Activated naive CD4-positive, alpha-beta T cell treated with anti-CD3 and anti-CD28 coated beads for 36 hours (primary cell): ENCODE measurements at regions of chr17 and their contacts with region 1.

Region 1: GRCh38 chr17:43940630-43941029 is 1.6 kb downstream of the PPY start:
- DNase-seq: peak; percentile 46
- H3K4me3 Mint-ChIP-seq: no peak overlapping the region
- H3K27ac Mint-ChIP-seq: no peak overlapping the region
- H3K4me1 Mint-ChIP-seq: peaks cover 20% of the 10 kb centered on the region
- H3K27me3 Mint-ChIP-seq: peaks cover 2% of the 10 kb centered on the region

Region 2: DNA sequence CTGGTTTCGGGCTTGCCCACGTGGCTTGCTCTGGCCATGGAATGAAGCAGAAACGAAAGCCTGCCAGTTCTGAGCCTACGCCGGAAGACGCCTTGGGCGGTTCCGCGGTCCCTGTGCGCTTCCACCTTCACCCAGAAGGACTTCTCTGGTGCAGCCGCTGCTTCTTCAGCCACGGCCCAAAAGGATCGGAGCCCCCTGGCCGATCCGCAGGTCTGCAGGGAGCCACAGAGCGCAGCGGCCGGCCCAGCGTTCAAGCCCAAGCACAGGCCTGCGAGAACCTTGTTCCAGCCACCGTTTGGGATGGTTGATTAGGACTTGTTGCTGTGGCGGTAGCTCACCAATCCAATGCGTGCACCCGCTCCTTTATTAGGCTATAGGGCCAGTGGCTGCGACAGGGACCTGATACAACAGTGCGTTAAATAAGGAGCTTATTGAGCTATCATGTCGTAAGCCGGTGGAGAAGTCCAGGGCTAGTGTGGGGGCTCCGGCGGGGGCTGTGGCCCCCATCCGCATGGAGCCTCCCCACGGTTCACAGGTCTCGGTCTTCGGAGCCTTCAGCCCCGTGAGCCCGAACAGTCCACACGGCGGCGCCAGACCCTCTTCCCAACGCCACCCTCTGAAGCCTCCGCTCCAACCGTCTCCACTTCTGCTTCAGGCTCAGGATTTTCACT is 23.1 kb before region 1 on chr17:
- CTCF ChIA-PET with region 1: interaction called, 6 read pairs
- intact Hi-C with region 1: loop called (anchors 1 kb)
- DNase-seq: peak; percentile 73
- H3K4me3 Mint-ChIP-seq: peak overlapping the region; percentile 65
- H3K27ac Mint-ChIP-seq: peak overlapping the region; percentile 9
- H3K4me1 Mint-ChIP-seq: peaks cover 13% of the 10 kb centered on the region
- H3K27me3 Mint-ChIP-seq: no peaks in the 10 kb centered on the region

Region 3: DNA sequence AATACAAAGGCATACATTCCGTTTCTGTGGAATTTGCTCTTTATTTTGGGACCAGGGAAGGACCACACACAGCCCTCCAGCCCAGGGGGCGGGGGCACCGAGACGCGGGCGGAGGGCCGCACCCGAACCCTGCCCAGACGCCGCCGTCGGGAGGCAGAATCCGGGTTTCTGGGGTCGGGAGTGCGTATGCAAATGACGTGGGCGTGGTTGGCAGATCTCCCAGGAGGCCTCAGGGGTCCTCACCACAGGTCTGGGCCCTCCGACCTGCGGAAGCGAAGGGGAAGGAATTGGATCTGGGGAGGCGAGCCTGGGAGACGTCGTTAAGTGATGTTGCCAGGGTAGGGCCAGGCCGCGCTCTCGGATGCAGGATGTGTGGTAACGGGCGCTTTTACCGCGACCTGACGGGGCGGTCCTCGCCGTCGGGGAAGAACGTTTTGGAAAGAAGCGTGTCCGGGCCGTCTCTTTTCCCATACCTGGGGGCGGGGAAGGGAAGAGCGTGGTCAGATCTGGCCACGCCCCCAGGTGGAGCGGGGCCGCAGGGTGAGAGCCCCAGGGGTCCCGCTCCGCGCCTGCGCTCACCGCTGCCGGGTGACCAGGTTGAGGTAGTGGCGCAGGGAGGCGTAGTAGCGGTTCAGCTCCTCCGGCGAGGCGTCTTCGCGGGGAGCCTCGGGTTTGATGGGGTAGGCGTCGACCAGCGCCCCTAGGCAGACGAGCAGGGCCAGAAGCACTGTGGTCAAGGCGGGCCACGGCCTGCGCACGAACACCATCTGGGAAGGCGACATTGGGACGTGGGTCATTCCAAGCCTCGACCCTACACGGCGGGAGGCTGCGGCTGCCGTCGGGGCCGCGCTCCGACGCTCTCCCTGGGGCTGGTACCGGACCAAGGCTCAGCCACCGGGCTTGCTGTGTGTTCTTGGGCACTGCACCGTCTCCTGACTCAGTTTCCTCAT is 12.4 kb after region 1 on chr17:
- CTCF ChIA-PET with region 1: interaction called, 10 read pairs
- intact Hi-C with region 1: no loop called
- DNase-seq: peak; percentile 21
- H3K4me3 Mint-ChIP-seq: no peak overlapping the region
- H3K27ac Mint-ChIP-seq: no peak overlapping the region
- H3K4me1 Mint-ChIP-seq: peaks cover 2% of the 10 kb centered on the region
- H3K27me3 Mint-ChIP-seq: peaks cover 35% of the 10 kb centered on the region

Region 4: GRCh38 chr17:43994272-43995149 is 53.9 kb after region 1 on chr17:
- CTCF ChIA-PET with region 1: interaction called, 51 read pairs
- intact Hi-C with region 1: loop called (anchors 1 kb)
- DNase-seq: peak; percentile 75
- H3K4me3 Mint-ChIP-seq: peak overlapping the region; percentile 39
- H3K27ac Mint-ChIP-seq: no peak overlapping the region
- H3K4me1 Mint-ChIP-seq: peaks cover 3% of the 10 kb centered on the region
- H3K27me3 Mint-ChIP-seq: peaks cover 8% of the 10 kb centered on the region

Region 5: DNA sequence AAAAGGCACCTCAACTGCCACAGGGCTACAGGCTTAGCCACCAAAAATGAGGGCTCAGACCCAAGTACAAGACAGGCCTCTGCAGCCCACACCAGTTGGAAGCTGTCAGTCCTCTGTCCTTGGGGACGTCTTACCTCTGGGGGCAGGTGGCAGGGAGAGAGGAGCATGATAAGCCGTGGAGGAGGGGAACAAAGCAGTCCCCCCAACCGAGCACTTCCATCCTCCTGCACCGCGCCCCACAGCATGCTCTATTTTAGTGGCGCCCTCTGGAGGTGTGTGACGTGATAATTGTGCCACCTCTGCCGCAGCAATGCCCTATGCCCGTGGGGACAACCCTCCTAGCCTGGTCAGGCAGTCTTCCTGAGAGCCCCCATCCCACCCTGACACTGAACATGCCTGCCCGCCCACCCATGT is 143.5 kb after region 1 on chr17:
- CTCF ChIA-PET with region 1: interaction called, 6 read pairs
- intact Hi-C with region 1: loop called (anchors 1 kb)
- DNase-seq: peak; percentile 63
- H3K4me3 Mint-ChIP-seq: no peak overlapping the region
- H3K27ac Mint-ChIP-seq: no peak overlapping the region
- H3K4me1 Mint-ChIP-seq: peaks cover 16% of the 10 kb centered on the region
- H3K27me3 Mint-ChIP-seq: no peaks in the 10 kb centered on the region

Region 6: DNA sequence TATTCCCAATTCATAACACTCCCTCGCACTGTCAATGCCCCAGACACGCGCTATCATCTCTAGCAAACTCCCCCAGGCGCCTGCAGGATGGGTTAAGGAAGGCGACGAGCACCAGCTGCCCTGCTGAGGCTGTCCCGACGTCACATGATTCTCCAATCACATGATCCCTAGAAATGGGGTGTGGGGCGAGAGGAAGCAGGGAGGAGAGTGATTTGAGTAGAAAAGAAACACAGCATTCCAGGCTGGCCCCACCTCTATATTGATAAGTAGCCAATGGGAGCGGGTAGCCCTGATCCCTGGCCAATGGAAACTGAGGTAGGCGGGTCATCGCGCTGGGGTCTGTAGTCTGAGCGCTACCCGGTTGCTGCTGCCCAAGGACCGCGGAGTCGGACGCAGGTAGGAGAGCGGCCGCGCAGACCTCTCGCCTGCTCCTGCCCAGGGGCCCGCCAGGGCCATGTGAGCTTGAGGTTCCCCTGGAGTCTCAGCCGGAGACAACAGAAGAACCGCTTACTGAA is 404.4 kb after region 1 on chr17 and contains the start of gene GRN:
- CTCF ChIA-PET with region 1: no interaction called
- intact Hi-C with region 1: loop called (anchors 5 kb)
- DNase-seq: peak; percentile 93
- H3K4me3 Mint-ChIP-seq: peak within 1 kb of the TSS; percentile 73
- H3K27ac Mint-ChIP-seq: peak within 1 kb of the TSS; percentile 43
- H3K4me1 Mint-ChIP-seq: peaks cover 10% of the 10 kb centered on the region
- H3K27me3 Mint-ChIP-seq: no peaks in the 10 kb centered on the region
- total RNA-seq, gene GRN: 47.1 to 50.5 TPM